T-cell (primary cell): ENCODE measurements at regions of chr4 and their contacts with region 1.

Region 1: DNA sequence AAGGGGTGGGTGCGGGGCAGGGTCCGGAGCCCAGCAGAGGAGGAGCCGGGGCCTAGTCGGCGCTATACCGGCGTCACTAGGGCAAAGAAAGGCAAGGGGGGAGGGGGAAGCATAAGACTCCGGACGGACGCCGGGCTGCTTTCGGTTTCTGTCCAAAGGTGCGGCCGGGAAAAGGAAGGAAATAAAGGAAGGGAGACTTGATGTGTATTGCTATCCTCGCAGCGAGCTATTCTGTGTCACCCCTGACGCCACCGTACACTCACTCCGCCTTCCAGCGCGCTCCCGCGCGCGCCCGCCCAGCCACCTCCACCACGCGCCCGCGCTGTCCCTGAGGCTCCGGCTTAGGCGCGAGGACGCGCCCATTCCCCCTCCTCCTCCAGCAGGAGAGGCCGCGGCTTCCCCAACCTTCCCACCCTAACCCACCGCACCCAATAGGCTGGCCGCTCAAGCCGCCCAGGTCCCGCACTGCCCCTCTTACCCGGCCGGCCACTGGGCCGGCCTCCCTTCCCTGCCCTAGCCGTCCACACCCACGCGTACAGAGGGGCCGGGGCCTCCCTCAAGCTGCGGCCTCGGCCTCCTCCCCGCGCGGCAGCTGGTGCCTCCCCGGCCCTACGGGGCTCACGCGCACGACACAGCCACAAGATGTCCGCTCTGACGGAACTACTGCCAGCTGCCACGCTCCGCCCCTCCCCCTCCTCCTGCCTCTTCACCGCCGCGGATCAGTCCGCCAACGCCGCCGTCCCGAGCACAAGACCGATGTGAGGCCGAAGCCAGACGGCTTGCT is at the start of gene UBE2D3:
- DNase-seq: peak; percentile 85 to 97 (median 93)
- ATAC-seq: peak; percentile 56 to 64 (median 58)
- H3K4me3 ChIP-seq: peak within 1 kb of the TSS; percentile 93 to 100
- H3K4me3 Mint-ChIP-seq: no peak within 1 kb of the TSS
- H3K27ac ChIP-seq: peak within 1 kb of the TSS; percentile 99
- H3K27ac Mint-ChIP-seq: no peak within 1 kb of the TSS
- H3K4me1 ChIP-seq: peaks cover 7 to 35% of the 10 kb centered on the region in 2 experiments
- H3K4me1 Mint-ChIP-seq: peaks cover 39 to 40% (median 40%) of the 10 kb centered on the region in 3 donors
- H3K27me3 ChIP-seq: no peaks in the 10 kb centered on the region
- H3K27me3 Mint-ChIP-seq: no peaks in the 10 kb centered on the region
- total RNA-seq, gene UBE2D3: 274 to 487 (median 289) TPM

Region 2: GRCh38 chr4:102760645-102761295 is 66.3 kb before region 1 on chr4 and contains the start of gene MANBA:
- CTCF ChIA-PET with region 1: interaction called in 1 of 2 experiments, 15 read pairs
- POLR2A ChIA-PET with region 1: interaction called, 7 to 11 read pairs
- DNase-seq: peak; percentile 67 to 89 (median 80)
- ATAC-seq: peak; percentile 89 to 97 (median 96)
- H3K4me3 ChIP-seq: peak within 1 kb of the TSS; percentile 82 to 97
- H3K4me3 Mint-ChIP-seq: peak within 1 kb of the TSS; percentile 93 to 99 (median 95)
- H3K27ac ChIP-seq: peak within 1 kb of the TSS; percentile 62
- H3K27ac Mint-ChIP-seq: peak within 1 kb of the TSS; percentile 87 to 90
- H3K4me1 ChIP-seq: peaks cover 12 to 18% of the 10 kb centered on the region in 2 experiments
- H3K4me1 Mint-ChIP-seq: peaks cover 44 to 46% (median 45%) of the 10 kb centered on the region in 3 donors
- H3K27me3 ChIP-seq: no peaks in the 10 kb centered on the region
- H3K27me3 Mint-ChIP-seq: peaks cover 0 to 1% of the 10 kb centered on the region in 2 donors
- total RNA-seq, gene MANBA: 20.8 to 27.8 (median 24.2) TPM

Region 3: GRCh38 chr4:102792361-102792936 is 34.6 kb before region 1 on chr4:
- CTCF ChIA-PET with region 1: interaction called in 1 of 2 experiments, 5 read pairs
- POLR2A ChIA-PET with region 1: interaction called, 6 to 16 read pairs
- DNase-seq: no peak
- ATAC-seq: peak in 3 of 4 experiments; percentile 19 to 35 (median 33)
- H3K4me3 ChIP-seq: no peak overlapping the region
- H3K4me3 Mint-ChIP-seq: no peak overlapping the region
- H3K27ac ChIP-seq: no peak overlapping the region
- H3K27ac Mint-ChIP-seq: peak overlapping the region; percentile 11 to 17
- H3K4me1 ChIP-seq: no peaks in the 10 kb centered on the region
- H3K4me1 Mint-ChIP-seq: peaks cover 22 to 29% (median 24%) of the 10 kb centered on the region in 3 donors
- H3K27me3 ChIP-seq: no peaks in the 10 kb centered on the region
- H3K27me3 Mint-ChIP-seq: no peaks in the 10 kb centered on the region

Region 4: GRCh38 chr4:102809190-102809589 is 17.9 kb before region 1 on chr4:
- CTCF ChIA-PET with region 1: interaction called, 3 to 7 read pairs
- POLR2A ChIA-PET with region 1: interaction called, 3 to 30 read pairs
- DNase-seq: no peak
- ATAC-seq: peak; percentile 37 to 90 (median 76)
- H3K4me3 ChIP-seq: no peak overlapping the region
- H3K4me3 Mint-ChIP-seq: peak overlapping the region in 2 of 3 donors; percentile 29 to 73
- H3K27ac ChIP-seq: peak overlapping the region; percentile 26
- H3K27ac Mint-ChIP-seq: peak overlapping the region; percentile 72 to 80
- H3K4me1 ChIP-seq: peaks cover 29 to 32% of the 10 kb centered on the region in 2 experiments
- H3K4me1 Mint-ChIP-seq: peaks cover 78 to 92% (median 87%) of the 10 kb centered on the region in 3 donors
- H3K27me3 ChIP-seq: no peaks in the 10 kb centered on the region
- H3K27me3 Mint-ChIP-seq: no peaks in the 10 kb centered on the region

Region 5: DNA sequence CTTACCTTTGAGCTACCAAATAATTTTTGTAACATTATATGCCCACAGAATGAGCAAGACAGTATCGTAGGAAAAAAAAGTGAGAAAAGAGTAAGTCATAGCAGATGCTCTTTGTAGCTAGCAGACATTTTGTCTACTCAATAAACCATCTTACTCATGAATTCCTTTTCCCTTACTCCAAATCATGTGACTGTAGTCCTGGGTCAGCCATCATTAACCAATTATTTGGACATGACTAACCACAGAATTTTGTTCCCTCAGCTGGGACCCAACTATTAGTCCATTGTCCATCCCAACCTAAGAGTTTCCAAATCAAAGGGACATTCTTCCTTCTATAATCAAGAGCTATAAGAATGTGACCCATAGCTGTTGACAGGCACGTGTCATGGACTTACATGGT is 11.1 kb before region 1 on chr4:
- CTCF ChIA-PET with region 1: interaction called, 3 to 29 read pairs
- POLR2A ChIA-PET with region 1: interaction called, 10 to 40 read pairs
- DNase-seq: no peak
- ATAC-seq: no peak
- H3K4me3 ChIP-seq: no peak overlapping the region
- H3K4me3 Mint-ChIP-seq: peak overlapping the region in 1 of 3 donors; percentile 52
- H3K27ac ChIP-seq: peak overlapping the region; percentile 13
- H3K27ac Mint-ChIP-seq: peak overlapping the region in 1 of 2 donors; percentile 23
- H3K4me1 ChIP-seq: peaks cover 45 to 75% of the 10 kb centered on the region in 2 experiments
- H3K4me1 Mint-ChIP-seq: peaks cover 86 to 94% (median 92%) of the 10 kb centered on the region in 3 donors
- H3K27me3 ChIP-seq: no peaks in the 10 kb centered on the region
- H3K27me3 Mint-ChIP-seq: no peaks in the 10 kb centered on the region

Region 6: DNA sequence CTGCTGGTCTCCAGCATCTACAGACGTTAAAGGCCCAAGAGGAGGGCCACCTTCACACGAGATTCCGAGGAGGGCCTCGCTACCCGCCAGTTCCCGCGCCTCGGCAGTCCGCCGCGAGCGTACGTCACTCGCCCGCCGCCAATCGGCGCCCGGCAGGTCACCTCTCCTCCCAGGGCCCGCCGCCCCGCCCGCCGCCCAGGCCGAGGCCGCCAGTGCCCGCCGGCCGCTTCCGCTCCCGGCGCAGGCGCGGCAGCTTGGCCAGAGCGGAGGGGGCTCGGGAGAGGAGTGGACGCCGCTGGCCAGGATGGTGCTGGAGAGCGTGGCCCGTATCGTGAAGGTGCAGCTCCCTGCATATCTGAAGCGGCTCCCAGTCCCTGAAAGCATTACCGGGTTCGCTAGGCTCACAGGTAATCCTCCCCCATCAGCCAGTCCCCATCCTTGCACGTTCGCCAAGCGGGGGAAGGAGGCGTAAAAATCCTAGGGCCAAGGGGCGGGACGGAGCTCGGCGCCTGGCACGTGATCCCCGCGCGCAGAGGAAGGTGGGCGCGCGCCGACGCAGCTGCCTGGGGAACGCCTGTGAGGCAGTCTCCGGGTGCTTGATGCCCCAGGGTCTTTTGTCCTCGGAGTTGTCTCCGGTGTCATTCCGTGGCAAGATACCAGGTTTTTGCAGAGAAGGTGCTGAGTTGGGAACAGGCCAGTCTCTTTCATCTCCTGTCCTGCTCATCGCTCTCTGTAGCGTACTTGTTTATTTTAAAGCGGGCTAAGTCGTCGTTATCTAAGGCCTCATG is 41.9 kb after region 1 on chr4 and contains the start of gene CISD2:
- CTCF ChIA-PET with region 1: interaction called in 1 of 2 experiments, 36 read pairs
- POLR2A ChIA-PET with region 1: interaction called, 9 to 65 read pairs
- DNase-seq: peak; percentile 81 to 95 (median 90)
- ATAC-seq: peak; percentile 86 to 89 (median 86)
- H3K4me3 ChIP-seq: peak within 1 kb of the TSS; percentile 85 to 87
- H3K4me3 Mint-ChIP-seq: peak within 1 kb of the TSS; percentile 91 to 98 (median 96)
- H3K27ac ChIP-seq: peak within 1 kb of the TSS; percentile 93
- H3K27ac Mint-ChIP-seq: peak within 1 kb of the TSS; percentile 98 to 99
- H3K4me1 ChIP-seq: peaks cover 14 to 39% of the 10 kb centered on the region in 2 experiments
- H3K4me1 Mint-ChIP-seq: peaks cover 56 to 70% (median 70%) of the 10 kb centered on the region in 3 donors
- H3K27me3 ChIP-seq: no peaks in the 10 kb centered on the region
- H3K27me3 Mint-ChIP-seq: no peaks in the 10 kb centered on the region
- total RNA-seq, gene CISD2: 12.2 to 14.2 (median 13.1) TPM